Activated CD8-positive, alpha-beta T cell treated with anti-CD3 and anti-CD28 coated beads, Interleukin-2, amount 10 ng/mL, durations not matched to agents 7 days and 5 days (primary cell): ENCODE measurements at regions of chr12 and their contacts with region 1.

Region 1: GRCh38 chr12:14239350-14239934 is 126.0 kb upstream of the ATF7IP start:
- DNase-seq: peak; percentile 51
- ATAC-seq: peak; percentile 74
- H3K4me3 Mint-ChIP-seq: peak overlapping the region; percentile 50
- H3K27ac Mint-ChIP-seq: peak overlapping the region; percentile 62
- H3K4me1 Mint-ChIP-seq: peaks cover 22% of the 10 kb centered on the region
- H3K27me3 Mint-ChIP-seq: no peaks in the 10 kb centered on the region

Region 2: DNA sequence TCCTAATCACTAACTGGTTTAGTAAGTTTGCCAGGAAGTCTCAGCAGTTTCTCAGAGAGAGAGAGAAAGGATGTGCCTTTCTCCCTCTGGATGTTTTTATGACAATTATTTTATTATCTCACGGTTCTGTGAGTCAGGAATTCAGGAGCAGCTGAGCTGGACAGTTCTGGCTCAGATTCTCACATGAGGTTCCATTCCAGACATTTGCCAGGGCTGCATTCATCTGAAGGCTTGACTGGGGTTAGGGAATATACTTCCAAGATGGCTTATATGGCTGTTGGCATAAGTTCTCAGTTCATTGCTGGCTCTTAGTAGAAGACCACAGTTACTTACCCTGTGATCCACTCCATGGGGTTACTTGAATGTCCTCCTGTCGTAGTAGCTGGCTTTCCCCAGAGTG is 24.9 kb after region 1 on chr12:
- CTCF ChIA-PET with region 1: interaction called, 13 read pairs
- POLR2A ChIA-PET with region 1: no interaction called
- DNase-seq: no peak
- ATAC-seq: no peak
- H3K4me3 Mint-ChIP-seq: no peak overlapping the region
- H3K27ac Mint-ChIP-seq: no peak overlapping the region
- H3K4me1 Mint-ChIP-seq: peaks cover 11% of the 10 kb centered on the region
- H3K27me3 Mint-ChIP-seq: no peaks in the 10 kb centered on the region

Region 3: DNA sequence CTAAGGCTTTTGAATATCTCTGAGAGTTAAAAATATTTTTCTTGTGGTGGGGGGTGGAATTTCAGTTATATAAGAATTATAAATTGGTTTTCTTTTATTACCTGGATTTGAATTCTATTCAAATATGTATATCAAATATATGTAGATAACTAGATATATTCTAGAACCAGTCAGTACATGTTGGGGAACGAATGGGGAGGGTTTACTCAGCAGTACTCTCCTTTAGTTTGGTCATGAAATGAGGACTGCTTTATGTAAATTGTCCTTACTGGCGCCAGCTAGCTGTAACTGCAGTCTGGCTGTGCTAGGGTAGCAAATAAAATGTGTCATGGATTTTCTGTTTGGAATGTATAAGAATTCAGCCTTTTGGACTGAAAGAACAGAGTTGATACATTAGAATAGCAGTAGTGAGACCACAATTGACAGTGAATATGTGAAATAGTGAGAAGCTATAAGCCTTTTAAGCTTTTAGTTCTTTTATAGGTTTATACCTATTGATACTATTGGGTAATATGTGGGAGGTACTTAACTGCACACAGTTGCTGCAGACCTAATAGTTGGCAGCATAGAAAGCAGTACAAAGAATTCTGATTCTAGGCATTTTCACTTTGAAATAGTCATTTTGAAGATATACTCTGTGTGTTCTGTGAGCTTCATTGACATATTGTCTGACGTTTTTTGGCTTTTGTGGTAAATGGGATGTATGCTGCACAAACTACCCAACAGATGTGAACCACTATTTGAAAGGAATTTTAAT is 155.1 kb after region 1 on chr12:
- CTCF ChIA-PET with region 1: interaction called, 12 read pairs
- POLR2A ChIA-PET with region 1: no interaction called
- DNase-seq: peak; percentile 67
- ATAC-seq: peak; percentile 78
- H3K4me3 Mint-ChIP-seq: peak overlapping the region; percentile 83
- H3K27ac Mint-ChIP-seq: peak overlapping the region; percentile 92
- H3K4me1 Mint-ChIP-seq: peaks cover 79% of the 10 kb centered on the region
- H3K27me3 Mint-ChIP-seq: no peaks in the 10 kb centered on the region

Region 4: GRCh38 chr12:14454098-14454907 is 214.9 kb after region 1 on chr12:
- CTCF ChIA-PET with region 1: interaction called, 72 read pairs
- POLR2A ChIA-PET with region 1: interaction called, 3 read pairs
- DNase-seq: peak; percentile 59
- ATAC-seq: peak; percentile 84
- H3K4me3 Mint-ChIP-seq: no peak overlapping the region
- H3K27ac Mint-ChIP-seq: peak overlapping the region; percentile 74
- H3K4me1 Mint-ChIP-seq: peaks cover 42% of the 10 kb centered on the region
- H3K27me3 Mint-ChIP-seq: no peaks in the 10 kb centered on the region

Region 5: DNA sequence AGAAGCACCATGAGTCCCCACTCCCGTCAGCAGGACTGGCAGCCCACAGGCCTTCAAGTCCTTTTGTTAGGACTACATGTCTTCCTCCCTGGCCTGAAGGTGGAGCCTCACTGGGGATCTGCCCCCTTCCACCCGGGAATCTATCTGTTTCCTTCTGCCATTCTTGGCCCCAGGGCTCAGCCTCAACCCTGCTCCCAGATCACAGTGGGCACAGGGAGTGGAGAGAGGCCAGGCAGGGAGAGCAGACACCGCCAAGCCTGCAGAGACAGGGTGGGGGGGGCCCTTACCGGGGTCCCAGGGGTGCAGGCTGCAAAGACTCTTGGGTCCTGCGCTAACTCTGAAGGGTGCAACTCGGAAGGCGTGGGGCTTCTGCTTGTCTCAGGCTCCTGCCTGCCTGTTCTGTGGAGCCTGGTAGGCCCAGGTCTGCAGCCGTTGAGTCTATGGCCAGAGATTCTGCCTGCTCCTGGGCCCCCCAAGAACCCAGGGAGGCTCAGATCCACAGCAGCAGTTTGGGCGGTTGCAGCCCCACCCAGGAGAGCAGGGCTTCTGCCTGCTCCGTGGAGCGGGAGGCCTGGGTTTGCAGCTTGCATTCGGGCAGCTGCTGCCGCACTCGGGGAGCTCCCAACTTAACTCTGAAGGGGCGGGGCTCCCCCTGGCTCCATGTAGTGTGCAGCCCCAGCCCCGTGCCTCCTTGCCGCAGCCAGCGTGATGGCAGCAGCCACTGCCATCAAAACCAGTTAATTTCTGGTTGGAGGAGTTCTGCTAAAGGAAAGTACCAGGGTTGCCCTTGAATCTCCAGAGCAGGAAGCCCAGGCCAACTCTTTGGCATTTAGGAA is 349.9 kb after region 1 on chr12:
- CTCF ChIA-PET with region 1: no interaction called
- POLR2A ChIA-PET with region 1: no interaction called
- DNase-seq: no peak
- ATAC-seq: no peak
- H3K4me3 Mint-ChIP-seq: no peak overlapping the region
- H3K27ac Mint-ChIP-seq: no peak overlapping the region
- H3K4me1 Mint-ChIP-seq: no peaks in the 10 kb centered on the region
- H3K27me3 Mint-ChIP-seq: no peaks in the 10 kb centered on the region

Region 6: GRCh38 chr12:14629832-14630710 is 390.6 kb after region 1 on chr12:
- CTCF ChIA-PET with region 1: interaction called, 14 read pairs
- POLR2A ChIA-PET with region 1: no interaction called
- DNase-seq: peak; percentile 72
- ATAC-seq: peak; percentile 97
- H3K4me3 Mint-ChIP-seq: no peak overlapping the region
- H3K27ac Mint-ChIP-seq: no peak overlapping the region
- H3K4me1 Mint-ChIP-seq: peaks cover 4% of the 10 kb centered on the region
- H3K27me3 Mint-ChIP-seq: peaks cover 7% of the 10 kb centered on the region